ENCODE measurements at regions of chr9 and their contacts with region 1.

Region 1: DNA sequence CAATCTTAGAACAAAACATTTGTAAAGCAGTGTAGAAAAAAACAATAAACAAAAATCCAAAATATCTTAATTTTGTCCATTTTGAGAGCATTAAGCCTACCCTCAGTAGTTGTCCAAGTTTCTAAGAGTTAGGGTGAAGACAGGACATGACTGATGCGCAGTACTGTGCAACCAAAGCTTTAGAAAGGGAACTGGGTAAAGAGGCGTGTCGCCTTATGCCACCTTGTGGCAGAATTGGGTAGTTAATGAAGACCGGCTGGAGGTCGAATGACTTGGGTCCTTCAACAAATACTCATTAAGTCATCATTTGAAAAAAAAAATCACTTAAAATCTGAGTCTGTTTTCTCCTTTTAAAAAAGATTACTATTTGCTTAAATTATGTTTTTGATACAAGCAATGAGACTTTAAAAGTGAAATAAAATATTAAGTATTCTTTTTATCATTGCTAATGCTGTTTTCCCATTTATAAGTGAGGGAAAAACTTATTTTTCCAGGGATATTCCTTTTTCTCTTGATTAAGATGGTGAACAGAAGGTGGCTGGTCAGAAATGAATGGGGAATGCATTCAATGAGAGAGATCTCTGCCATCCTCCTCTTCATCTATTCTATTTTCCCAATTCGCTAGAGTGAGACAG is 3.5 kb upstream of the RNF20 start:
- DNase-seq: peak; percentile 81
- H3K4me3 ChIP-seq: no peak overlapping the region
- H3K27ac ChIP-seq: no peak overlapping the region
- H3K4me1 ChIP-seq: peaks cover 8% of the 10 kb centered on the region
- H3K27me3 ChIP-seq: no peaks in the 10 kb centered on the region
- CTCF ChIP-seq: peak; percentile 70 to 77
- POLR2A ChIP-seq: no peak

Region 2: DNA sequence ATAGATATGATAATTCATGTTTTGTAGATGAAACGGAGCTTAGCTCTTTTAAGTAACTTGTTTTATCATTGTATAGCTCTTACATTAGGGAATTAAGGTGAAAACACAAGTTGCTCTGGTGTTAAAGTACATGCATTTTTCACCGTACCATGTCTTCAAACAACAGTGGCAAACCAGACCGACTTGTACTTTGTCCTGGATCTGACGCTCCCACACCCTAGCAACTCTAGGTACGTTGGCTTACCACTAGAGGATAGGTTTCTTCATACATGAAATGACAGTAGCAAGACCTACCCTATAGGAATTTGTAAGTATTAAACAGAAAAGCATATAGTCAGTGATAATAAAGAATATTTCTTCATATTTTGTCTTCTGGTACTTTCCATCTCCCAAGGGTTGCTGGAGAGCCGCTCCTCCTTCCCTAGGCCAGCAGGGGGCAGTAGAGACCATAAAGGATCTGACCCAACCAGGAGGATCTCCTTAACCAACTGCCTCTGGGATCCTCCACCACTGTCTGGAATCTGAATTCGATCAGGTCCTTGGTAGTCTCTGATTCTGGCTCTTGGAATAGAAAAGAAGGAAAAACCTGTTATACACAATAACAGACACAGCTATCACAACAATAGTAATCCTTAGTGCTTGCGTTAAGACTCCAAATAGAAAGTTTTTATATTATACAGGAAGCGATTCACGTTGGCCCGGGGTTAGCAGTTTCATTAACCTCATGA is 815.7 kb before region 1 on chr9:
- CTCF ChIA-PET with region 1: interaction called, 12 read pairs
- POLR2A ChIA-PET with region 1: no interaction called
- dilution Hi-C with region 1: no loop called
- intact Hi-C with region 1: loop called (anchors 1 kb)
- DNase-seq: peak; percentile 57
- H3K4me3 ChIP-seq: no peak overlapping the region
- H3K27ac ChIP-seq: no peak overlapping the region
- H3K4me1 ChIP-seq: no peaks in the 10 kb centered on the region
- H3K27me3 ChIP-seq: no peaks in the 10 kb centered on the region
- CTCF ChIP-seq: peak; percentile 80 to 81
- POLR2A ChIP-seq: no peak

Region 3: GRCh38 chr9:101398068-101398929 is 131.9 kb before region 1 on chr9 and contains the starts of genes MRPL50 and ZNF189:
- CTCF ChIA-PET with region 1: interaction called, 9 read pairs
- POLR2A ChIA-PET with region 1: interaction called, 6 read pairs
- dilution Hi-C with region 1: no loop called
- intact Hi-C with region 1: loop called (anchors 1 kb)
- DNase-seq: peak; percentile 99
- H3K4me3 ChIP-seq: peak within 1 kb of the TSS; percentile 66 to 97 (median 92)
- H3K27ac ChIP-seq: peak within 1 kb of the TSS; percentile 87
- H3K4me1 ChIP-seq: peaks cover 26% of the 10 kb centered on the region
- H3K27me3 ChIP-seq: no peaks in the 10 kb centered on the region
- CTCF ChIP-seq: no peak
- POLR2A ChIP-seq: peak; percentile 78
- total RNA-seq, gene MRPL50: 8.6 and 9.7 TPM in 2 replicates
- total RNA-seq, gene ZNF189: 14.4 and 14.6 TPM in 2 replicates

Region 4: GRCh38 chr9:101449140-101449721 is 81.0 kb before region 1 on chr9:
- CTCF ChIA-PET with region 1: interaction called, 96 read pairs
- POLR2A ChIA-PET with region 1: no interaction called
- dilution Hi-C with region 1: no loop called
- intact Hi-C with region 1: loop called (anchors 1 kb)
- DNase-seq: peak; percentile 77
- H3K4me3 ChIP-seq: peak overlapping the region; percentile 19 to 30 (median 23)
- H3K27ac ChIP-seq: no peak overlapping the region
- H3K4me1 ChIP-seq: no peaks in the 10 kb centered on the region
- H3K27me3 ChIP-seq: peaks cover 7 to 12% of the 10 kb centered on the region in 2 experiments
- CTCF ChIP-seq: peak; percentile 54 to 65
- POLR2A ChIP-seq: no peak

Region 5: GRCh38 chr9:101458955-101459631 is 71.1 kb before region 1 on chr9:
- CTCF ChIA-PET with region 1: interaction called, 261 read pairs
- POLR2A ChIA-PET with region 1: no interaction called
- dilution Hi-C with region 1: no loop called
- intact Hi-C with region 1: loop called (anchors 1 kb)
- DNase-seq: peak; percentile 77
- H3K4me3 ChIP-seq: no peak overlapping the region
- H3K27ac ChIP-seq: no peak overlapping the region
- H3K4me1 ChIP-seq: no peaks in the 10 kb centered on the region
- H3K27me3 ChIP-seq: peaks cover 0 to 2% of the 10 kb centered on the region in 2 experiments
- CTCF ChIP-seq: peak; percentile 45 to 71
- POLR2A ChIP-seq: no peak

Measured in endothelial cell of umbilical vein (primary cell).